MCF 10A (cell line): ENCODE measurements at regions of chr5 and their contacts with region 1.

Region 1: GRCh38 chr5:149561848-149562247 is 10.6 kb upstream of the CSNK1A1 start:
- DNase-seq: peak; percentile 97
- H3K4me3 Mint-ChIP-seq: peak overlapping the region; percentile 50
- H3K27ac Mint-ChIP-seq: peak overlapping the region; percentile 82
- H3K4me1 Mint-ChIP-seq: peaks cover 38% of the 10 kb centered on the region
- H3K27me3 Mint-ChIP-seq: no peaks in the 10 kb centered on the region
- CTCF ChIP-seq: no peak

Region 2: GRCh38 chr5:149317281-149318048 is 244.4 kb before region 1 on chr5:
- CTCF ChIA-PET with region 1: interaction called, 14 read pairs
- POLR2A ChIA-PET with region 1: interaction called, 22 read pairs
- intact Hi-C with region 1: loop called (anchors 1 kb)
- DNase-seq: peak; percentile 71
- H3K4me3 Mint-ChIP-seq: no peak overlapping the region
- H3K27ac Mint-ChIP-seq: no peak overlapping the region
- H3K4me1 Mint-ChIP-seq: peaks cover 12% of the 10 kb centered on the region
- H3K27me3 Mint-ChIP-seq: no peaks in the 10 kb centered on the region
- CTCF ChIP-seq: peak; percentile 78

Region 3: GRCh38 chr5:149367249-149367971 is 194.4 kb before region 1 on chr5:
- CTCF ChIA-PET with region 1: interaction called, 36 read pairs
- POLR2A ChIA-PET with region 1: interaction called, 6 read pairs
- intact Hi-C with region 1: loop called (anchors 1 kb)
- DNase-seq: peak; percentile 87
- H3K4me3 Mint-ChIP-seq: no peak overlapping the region
- H3K27ac Mint-ChIP-seq: no peak overlapping the region
- H3K4me1 Mint-ChIP-seq: peaks cover 8% of the 10 kb centered on the region
- H3K27me3 Mint-ChIP-seq: no peaks in the 10 kb centered on the region
- CTCF ChIP-seq: peak; percentile 85

Region 4: DNA sequence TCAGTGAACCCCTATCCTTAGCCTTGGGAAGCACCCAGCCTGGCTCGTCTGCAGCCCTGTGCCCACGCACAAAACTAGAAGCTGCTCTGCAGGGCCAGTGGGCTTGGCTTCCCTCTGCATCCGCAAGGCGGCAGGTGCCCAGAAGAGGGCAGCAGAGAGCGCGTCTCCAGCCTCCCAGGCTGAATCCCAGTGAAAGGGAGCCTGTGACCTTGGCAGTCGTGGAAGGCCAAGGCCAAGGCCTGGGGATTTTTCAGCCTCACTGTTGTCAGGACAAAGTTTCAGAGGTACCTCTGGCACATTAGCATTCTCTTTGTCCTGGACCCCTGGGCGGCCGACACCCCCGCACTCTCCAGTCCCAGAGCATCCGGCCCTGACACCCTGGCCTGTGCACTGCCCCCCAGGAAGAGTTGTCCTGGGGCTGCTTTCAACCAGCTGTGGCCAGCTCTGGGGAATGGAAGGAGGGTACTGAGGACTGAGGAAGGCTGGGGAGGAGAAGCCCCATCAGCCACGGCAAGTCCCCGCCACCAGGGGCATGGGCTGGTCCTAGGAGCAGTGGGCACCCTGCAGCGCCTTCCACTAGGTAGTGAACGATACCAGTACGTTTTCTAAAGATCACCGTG is 119.2 kb before region 1 on chr5:
- CTCF ChIA-PET with region 1: interaction called, 49 read pairs
- POLR2A ChIA-PET with region 1: interaction called, 162 read pairs
- intact Hi-C with region 1: loop called (anchors 1 kb)
- DNase-seq: peak; percentile 88
- H3K4me3 Mint-ChIP-seq: peak overlapping the region; percentile 41
- H3K27ac Mint-ChIP-seq: peak overlapping the region; percentile 84
- H3K4me1 Mint-ChIP-seq: peaks cover 65% of the 10 kb centered on the region
- H3K27me3 Mint-ChIP-seq: no peaks in the 10 kb centered on the region
- CTCF ChIP-seq: peak; percentile 96

Region 5: DNA sequence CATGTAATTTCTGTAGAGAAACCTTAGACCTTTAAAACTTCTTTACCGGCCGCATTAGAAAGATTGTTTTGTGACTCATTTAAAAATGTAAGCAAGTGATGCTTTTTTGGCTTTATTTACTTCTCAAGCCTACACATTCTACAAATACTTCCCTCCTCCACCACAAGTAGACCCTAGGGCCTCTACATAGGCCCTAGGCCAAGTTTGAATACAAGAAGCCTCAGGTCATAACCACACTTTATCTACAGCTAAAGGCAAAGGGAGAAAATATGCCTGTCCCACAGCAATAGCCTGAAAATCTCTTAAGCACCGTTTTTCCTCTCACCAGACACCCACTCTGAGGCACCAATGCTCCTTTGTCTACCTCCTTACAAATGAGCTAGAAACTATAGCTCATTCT is 64.5 kb before region 1 on chr5:
- CTCF ChIA-PET with region 1: interaction called, 10 read pairs
- POLR2A ChIA-PET with region 1: interaction called, 28 read pairs
- intact Hi-C with region 1: no loop called
- DNase-seq: no peak
- H3K4me3 Mint-ChIP-seq: no peak overlapping the region
- H3K27ac Mint-ChIP-seq: peak overlapping the region; percentile 14
- H3K4me1 Mint-ChIP-seq: no peaks in the 10 kb centered on the region
- H3K27me3 Mint-ChIP-seq: no peaks in the 10 kb centered on the region
- CTCF ChIP-seq: no peak

Region 6: DNA sequence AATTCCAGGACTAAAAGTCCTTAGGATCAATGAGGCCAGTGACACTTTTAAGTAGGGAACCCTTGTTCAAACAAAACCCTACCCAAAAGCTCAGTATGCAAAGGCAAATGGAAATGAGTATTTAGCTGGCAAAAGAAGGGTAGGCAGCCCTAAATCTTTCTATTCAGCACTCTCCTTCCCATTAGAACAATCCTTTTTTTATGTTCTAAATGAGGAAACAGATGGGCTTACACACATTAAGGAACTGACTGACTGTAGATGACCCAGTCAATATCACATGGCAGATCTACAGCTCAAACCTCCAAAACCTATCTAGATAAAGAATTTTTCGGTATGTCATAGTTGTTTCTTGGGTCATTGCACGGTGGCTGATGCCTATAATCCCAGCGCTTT is 17.8 kb before region 1 on chr5:
- CTCF ChIA-PET with region 1: interaction called, 109 read pairs
- POLR2A ChIA-PET with region 1: interaction called, 517 read pairs
- intact Hi-C with region 1: no loop called
- DNase-seq: no peak
- H3K4me3 Mint-ChIP-seq: peak overlapping the region; percentile 14
- H3K27ac Mint-ChIP-seq: no peak overlapping the region
- H3K4me1 Mint-ChIP-seq: peaks cover 33% of the 10 kb centered on the region
- H3K27me3 Mint-ChIP-seq: no peaks in the 10 kb centered on the region
- CTCF ChIP-seq: no peak

Region 7: GRCh38 chr5:149611326-149611725 is 49.5 kb after region 1 on chr5:
- CTCF ChIA-PET with region 1: interaction called, 17 read pairs
- POLR2A ChIA-PET with region 1: interaction called, 47 read pairs
- intact Hi-C with region 1: no loop called
- DNase-seq: no peak
- H3K4me3 Mint-ChIP-seq: no peak overlapping the region
- H3K27ac Mint-ChIP-seq: no peak overlapping the region
- H3K4me1 Mint-ChIP-seq: peaks cover 26% of the 10 kb centered on the region
- H3K27me3 Mint-ChIP-seq: no peaks in the 10 kb centered on the region
- CTCF ChIP-seq: no peak